Cardiac septum (tissue), 1 donor: ENCODE measurements at regions of chr1 and their contacts with region 1.

Region 1: DNA sequence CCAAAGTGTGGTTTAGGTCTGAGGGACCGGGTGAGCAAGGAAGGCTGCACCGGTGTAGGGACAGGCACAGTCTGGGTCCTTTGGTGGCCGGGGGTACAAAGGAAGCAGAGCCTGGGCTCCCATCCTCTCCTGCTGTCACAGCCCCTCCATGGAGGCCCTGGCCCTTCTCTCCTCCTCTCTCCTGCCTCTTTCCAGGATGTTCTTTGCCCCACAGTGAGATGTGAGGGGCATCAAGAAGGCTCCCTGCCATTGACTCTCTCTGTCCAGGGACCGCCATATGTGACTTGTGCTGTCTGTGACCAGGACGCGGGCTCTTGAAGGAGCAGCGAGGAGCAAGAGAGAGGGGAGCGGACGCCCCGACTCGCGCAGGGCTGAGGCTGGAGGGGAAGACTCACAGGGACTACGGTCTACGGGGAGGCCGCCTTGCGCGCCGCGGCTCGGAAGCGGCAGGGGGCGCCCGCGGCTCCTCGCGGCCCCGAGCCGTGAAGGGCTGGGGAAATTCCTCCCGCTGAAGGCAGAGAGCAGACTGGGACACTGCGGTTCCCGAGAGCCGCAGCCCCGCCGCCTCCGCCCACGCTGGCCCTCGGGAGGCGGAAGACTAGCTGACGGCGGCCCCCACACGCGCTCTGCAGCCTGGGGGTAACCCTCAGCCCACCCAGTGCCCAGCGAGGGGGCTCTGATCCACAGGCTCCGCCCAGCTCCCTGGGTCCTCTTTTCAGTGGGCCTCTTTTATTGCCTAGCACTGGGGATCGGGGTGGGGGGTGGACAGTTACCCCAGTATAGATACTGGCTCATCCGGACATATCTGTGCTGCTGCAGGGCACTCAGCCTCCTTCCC is 40.8 kb downstream of the MAB21L3 start:
- DNase-seq: peak; percentile 89

Region 2: DNA sequence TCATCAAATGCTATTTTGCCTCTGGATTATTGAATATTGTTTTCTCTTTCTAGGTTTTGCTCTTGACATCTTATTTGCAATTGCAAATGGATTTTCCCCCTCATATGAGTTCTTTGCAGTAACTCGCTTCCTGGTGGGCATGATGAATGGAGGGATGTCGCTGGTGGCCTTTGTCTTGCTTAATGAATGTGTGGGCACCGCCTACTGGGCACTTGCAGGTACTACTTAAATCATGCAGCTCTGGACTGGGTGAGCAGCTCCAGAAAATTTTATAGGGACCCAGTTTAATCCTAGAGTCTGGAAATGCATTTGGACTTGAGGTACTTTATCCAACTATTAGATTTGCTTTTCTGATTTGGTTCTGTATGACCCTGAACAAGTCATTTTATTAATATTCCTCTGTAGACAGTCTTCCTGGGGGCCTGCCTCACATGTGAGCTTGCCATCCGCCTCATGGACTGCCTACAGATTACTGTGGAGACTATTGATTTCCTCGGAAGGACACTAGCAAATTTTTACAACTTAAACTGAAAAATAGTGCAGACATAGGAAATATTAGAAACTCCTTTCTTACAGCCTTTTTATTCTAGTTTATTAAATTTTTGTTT is 131.2 kb before region 1 on chr1:
- intact Hi-C with region 1: no loop called
- DNase-seq: no peak

Region 3: DNA sequence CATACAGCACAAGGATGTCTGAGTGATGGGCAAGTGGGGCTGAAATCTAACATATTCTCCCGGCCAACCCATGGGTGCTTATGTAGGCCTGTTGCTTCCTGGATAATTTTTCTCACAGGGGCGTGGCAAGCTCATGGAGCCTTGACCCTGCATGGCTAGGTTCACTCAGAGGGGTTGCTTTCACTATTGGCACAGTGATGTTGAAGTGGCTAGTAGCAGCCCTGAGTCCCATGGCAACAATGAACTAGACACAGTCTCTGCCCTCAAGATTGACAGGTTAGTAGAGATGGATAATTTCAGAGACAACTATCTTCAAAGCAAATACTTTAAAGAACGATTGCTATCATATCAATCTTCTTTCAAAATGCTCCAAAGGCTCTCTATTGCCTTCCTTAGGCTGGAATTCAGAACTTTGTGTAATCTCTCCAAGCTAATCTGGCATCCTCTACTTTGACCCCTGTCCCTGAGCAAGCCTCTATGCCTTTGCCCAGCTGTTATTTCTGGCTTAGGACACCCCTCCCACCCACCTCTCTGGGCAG is 47.2 kb before region 1 on chr1:
- intact Hi-C with region 1: no loop called
- DNase-seq: no peak

Region 4: DNA sequence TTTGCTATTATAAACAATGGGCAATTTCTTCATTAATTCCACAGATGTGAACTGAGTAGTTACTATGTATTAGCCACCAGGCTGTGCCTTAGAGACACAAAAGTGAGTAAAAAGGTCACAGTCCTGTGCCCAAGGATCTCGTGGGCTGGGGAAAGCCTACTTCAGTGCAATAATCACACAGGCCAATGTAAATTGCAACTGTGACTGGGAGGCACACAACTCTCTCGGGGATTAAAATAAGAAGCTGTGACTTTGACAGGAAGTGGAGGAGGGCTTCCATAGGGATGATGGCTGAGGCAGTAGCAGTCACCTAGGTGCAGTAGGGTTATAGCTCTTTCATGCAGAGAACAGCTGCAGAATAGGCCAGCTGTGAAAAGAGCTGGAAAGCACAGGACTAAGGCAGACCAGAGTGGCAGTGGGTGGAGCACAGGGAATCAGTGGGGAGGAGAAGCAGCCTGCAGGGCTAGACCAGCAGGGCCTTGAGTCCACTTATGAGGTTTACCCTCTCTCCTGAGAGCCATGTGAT is 81.1 kb after region 1 on chr1:
- intact Hi-C with region 1: no loop called
- DNase-seq: no peak

Region 5: GRCh38 chr1:116243333-116244054 is 91.5 kb after region 1 on chr1:
- intact Hi-C with region 1: no loop called
- DNase-seq: no peak

Region 6: GRCh38 chr1:116372587-116373444 is 220.9 kb after region 1 on chr1 and contains the start of gene ATP1A1:
- intact Hi-C with region 1: loop called (anchors 5 kb)
- DNase-seq: peak; percentile 100
- total RNA-seq, gene ATP1A1: 192 TPM